CD4-positive, alpha-beta T cell (primary cell): ENCODE measurements at regions of chr3 and their contacts with region 1.

Region 1: DNA sequence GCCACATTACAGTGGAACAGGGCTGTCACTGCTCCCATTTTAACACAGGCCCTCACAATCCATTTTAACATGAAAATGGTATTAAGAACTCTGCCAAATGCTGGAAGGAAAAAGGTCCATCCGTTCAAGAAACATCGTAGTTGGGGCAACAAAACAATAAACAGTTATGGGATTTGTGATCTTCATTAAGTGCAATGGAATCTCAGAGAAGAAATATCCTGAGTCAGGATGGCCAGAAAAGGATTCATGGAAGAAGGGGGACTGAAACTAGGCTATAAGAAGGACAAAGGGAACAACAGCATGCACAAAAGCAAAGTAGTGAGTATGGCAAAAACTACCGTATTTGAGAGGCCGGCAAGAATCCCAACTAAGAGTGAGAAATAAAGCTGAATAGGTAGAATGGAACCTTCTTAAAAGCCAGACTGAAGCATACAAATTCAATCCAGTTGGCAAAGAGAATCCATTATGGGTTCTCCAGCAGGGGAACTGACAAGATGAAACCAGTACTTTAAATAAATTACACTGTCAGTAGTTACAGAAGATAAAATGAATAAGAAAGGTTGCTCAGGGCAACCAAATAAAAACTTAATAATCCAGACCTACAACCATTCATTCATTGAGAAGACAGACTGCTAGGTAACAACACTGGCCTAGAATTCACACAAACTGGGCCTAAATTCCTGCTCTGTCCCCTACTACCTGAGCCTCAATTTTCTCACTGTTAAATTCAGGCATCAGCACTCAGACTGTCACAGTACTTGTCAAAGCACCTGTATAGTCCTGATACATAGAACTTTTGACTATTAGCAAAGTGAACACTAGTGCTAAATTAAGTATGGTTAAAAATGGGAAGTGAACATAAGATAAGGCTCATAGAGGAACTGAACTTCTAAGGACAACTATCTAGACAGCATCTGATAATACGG is 6.3 kb downstream of the TBL1XR1 start:
- DNase-seq: no peak
- ATAC-seq: no peak
- H3K4me3 ChIP-seq: no peak overlapping the region
- H3K4me3 Mint-ChIP-seq: peak overlapping the region; percentile 52
- H3K27ac ChIP-seq: no peak overlapping the region
- H3K27ac Mint-ChIP-seq: peak overlapping the region; percentile 74
- H3K4me1 ChIP-seq: peaks cover 56% of the 10 kb centered on the region
- H3K4me1 Mint-ChIP-seq: peaks cover 75% of the 10 kb centered on the region
- H3K27me3 ChIP-seq: no peaks in the 10 kb centered on the region
- H3K27me3 Mint-ChIP-seq: no peaks in the 10 kb centered on the region
- CTCF ChIP-seq: no peak

Region 2: DNA sequence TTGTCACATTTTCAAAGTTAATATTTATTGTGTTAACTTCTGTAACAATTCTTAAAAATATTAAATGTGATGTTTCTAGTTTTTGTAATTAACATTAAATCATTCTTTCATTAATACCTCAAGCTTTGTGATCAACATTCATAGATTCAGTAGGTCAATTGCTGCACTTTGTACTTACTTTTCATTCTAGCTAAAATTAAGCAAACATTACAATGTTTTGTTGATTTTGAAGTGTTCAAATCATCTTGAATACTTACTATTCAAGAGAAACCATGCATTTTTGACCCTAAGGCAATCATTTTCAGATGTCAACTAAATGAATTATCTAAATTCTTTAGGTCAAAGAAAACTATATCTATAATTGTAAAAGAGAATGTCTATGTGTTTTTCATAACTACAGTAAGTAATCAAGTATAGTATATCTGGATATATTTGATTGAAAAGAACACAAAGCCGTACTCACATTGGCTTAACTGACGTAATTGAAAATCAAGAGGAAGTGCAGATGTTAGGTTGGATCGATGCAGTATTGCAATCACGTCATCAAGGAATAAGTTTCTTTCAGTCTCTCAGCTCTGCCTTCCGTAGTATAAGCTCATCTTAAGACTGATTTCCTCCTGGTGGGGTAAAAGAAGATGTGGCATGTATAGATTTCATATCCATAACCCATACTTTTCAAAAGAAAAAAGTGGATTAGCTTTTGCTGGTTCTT is 1398.6 kb before region 1 on chr3:
- CTCF ChIA-PET with region 1: no interaction called
- POLR2A ChIA-PET with region 1: no interaction called
- intact Hi-C with region 1: no loop called
- DNase-seq: no peak
- ATAC-seq: no peak
- H3K4me3 ChIP-seq: no peak overlapping the region
- H3K4me3 Mint-ChIP-seq: no peak overlapping the region
- H3K27ac ChIP-seq: no peak overlapping the region
- H3K27ac Mint-ChIP-seq: no peak overlapping the region
- H3K4me1 ChIP-seq: no peaks in the 10 kb centered on the region
- H3K4me1 Mint-ChIP-seq: no peaks in the 10 kb centered on the region
- H3K27me3 ChIP-seq: no peaks in the 10 kb centered on the region
- H3K27me3 Mint-ChIP-seq: no peaks in the 10 kb centered on the region
- CTCF ChIP-seq: no peak

Region 3: GRCh38 chr3:177041021-177041729 is 149.8 kb before region 1 on chr3:
- CTCF ChIA-PET with region 1: no interaction called
- POLR2A ChIA-PET with region 1: no interaction called
- intact Hi-C with region 1: no loop called
- DNase-seq: no peak
- ATAC-seq: no peak
- H3K4me3 ChIP-seq: no peak overlapping the region
- H3K4me3 Mint-ChIP-seq: no peak overlapping the region
- H3K27ac ChIP-seq: no peak overlapping the region
- H3K27ac Mint-ChIP-seq: peak overlapping the region; percentile 21
- H3K4me1 ChIP-seq: peaks cover 9% of the 10 kb centered on the region
- H3K4me1 Mint-ChIP-seq: peaks cover 36% of the 10 kb centered on the region
- H3K27me3 ChIP-seq: no peaks in the 10 kb centered on the region
- H3K27me3 Mint-ChIP-seq: no peaks in the 10 kb centered on the region
- CTCF ChIP-seq: no peak

Region 4: DNA sequence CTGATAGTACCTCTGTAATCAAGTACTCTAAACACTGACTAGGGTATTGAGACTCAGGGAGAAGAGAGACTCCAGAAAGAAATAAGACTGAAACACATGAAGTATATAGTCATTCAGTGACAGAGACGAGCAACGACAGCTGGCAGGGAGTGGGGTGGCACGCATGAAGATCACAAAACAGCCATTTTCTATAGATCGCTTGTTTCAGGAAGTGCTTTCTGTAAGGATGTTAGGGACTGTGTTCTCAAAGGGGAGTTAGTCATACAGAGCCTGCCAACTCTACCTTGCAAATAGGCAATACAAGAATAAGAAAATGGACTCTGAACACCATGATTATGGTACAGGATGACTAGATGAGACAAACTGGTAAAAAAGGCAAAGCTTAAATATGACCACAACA is 133.3 kb before region 1 on chr3:
- CTCF ChIA-PET with region 1: no interaction called
- POLR2A ChIA-PET with region 1: interaction called, 73 read pairs
- intact Hi-C with region 1: loop called in 1 of 2 experiments (anchors 1 kb)
- DNase-seq: peak in 12 of 14 experiments; percentile 3 to 67 (median 22)
- ATAC-seq: peak; percentile 97
- H3K4me3 ChIP-seq: no peak overlapping the region
- H3K4me3 Mint-ChIP-seq: no peak overlapping the region
- H3K27ac ChIP-seq: no peak overlapping the region
- H3K27ac Mint-ChIP-seq: no peak overlapping the region
- H3K4me1 ChIP-seq: peaks cover 5% of the 10 kb centered on the region
- H3K4me1 Mint-ChIP-seq: peaks cover 36% of the 10 kb centered on the region
- H3K27me3 ChIP-seq: no peaks in the 10 kb centered on the region
- H3K27me3 Mint-ChIP-seq: no peaks in the 10 kb centered on the region
- CTCF ChIP-seq: no peak

Region 5: DNA sequence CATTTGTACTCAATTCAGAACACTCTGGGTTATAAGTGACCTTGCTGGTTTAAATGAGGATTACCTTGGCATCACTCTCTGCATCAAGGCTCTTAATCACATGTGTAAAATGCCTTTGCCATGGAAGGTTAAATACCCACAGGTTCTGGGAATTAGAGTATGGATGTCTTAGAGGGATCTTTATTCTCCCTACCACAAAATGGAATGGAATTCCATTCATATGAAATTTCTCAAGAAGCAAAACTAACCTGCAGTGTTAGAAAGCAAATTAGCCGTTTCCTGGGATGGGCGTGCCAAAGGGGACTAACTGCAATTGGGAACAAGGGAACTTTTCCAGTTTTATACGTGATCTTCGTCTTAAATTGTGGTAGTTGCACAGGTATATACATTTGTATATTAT is 33.5 kb before region 1 on chr3:
- CTCF ChIA-PET with region 1: interaction called, 3 read pairs
- POLR2A ChIA-PET with region 1: no interaction called
- intact Hi-C with region 1: loop called in 1 of 2 experiments (anchors 5 kb)
- DNase-seq: no peak
- ATAC-seq: no peak
- H3K4me3 ChIP-seq: no peak overlapping the region
- H3K4me3 Mint-ChIP-seq: no peak overlapping the region
- H3K27ac ChIP-seq: no peak overlapping the region
- H3K27ac Mint-ChIP-seq: peak overlapping the region; percentile 14
- H3K4me1 ChIP-seq: peaks cover 14% of the 10 kb centered on the region
- H3K4me1 Mint-ChIP-seq: peaks cover 73% of the 10 kb centered on the region
- H3K27me3 ChIP-seq: no peaks in the 10 kb centered on the region
- H3K27me3 Mint-ChIP-seq: no peaks in the 10 kb centered on the region
- CTCF ChIP-seq: no peak